GM12878 (cell line): ENCODE measurements at regions of chr5 and their contacts with region 1.

Region 1: GRCh38 chr5:77770293-77771005 is 5.7 kb downstream of the TBCA start:
- DNase-seq: no peak
- ATAC-seq: peak; percentile 23
- H3K4me3 ChIP-seq: peak overlapping the region; percentile 3; the same call in 1 of the 2 replicates
- H3K27ac ChIP-seq: no peak overlapping the region
- H3K4me1 ChIP-seq: no peaks in the 10 kb centered on the region
- H3K27me3 ChIP-seq: no peaks in the 10 kb centered on the region
- CTCF ChIP-seq: no peak
- EP300 ChIP-seq: no peak
- POLR2A ChIP-seq: no peak
- RAD21 ChIP-seq: no peak

Region 2: DNA sequence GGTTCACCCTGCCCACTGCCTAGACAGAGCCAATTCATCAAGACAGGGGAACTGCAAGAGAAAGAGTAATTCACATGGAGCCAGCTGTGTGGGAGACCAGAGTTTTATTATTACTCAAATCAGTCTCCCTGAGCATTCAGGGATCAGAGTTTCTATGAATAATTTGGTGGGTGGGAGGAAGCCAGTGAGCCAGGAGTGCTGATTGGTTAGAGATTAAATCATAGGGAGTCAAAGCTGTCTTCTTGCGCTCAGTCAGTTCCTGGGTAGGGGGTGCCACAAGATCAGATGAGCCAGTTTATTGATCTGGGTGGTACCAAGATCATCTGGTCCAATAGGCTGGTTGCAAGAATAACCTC is 18.8 kb before region 1 on chr5:
- CTCF ChIA-PET with region 1: no interaction called
- POLR2A ChIA-PET with region 1: interaction called, 5 read pairs
- RAD21 ChIA-PET with region 1: interaction called, 4 read pairs
- SMC1A ChIA-PET with region 1: interaction called, 14 read pairs
- in situ Hi-C with region 1: no loop called
- intact Hi-C with region 1: no loop called
- DNase-seq: no peak
- ATAC-seq: no peak
- H3K4me3 ChIP-seq: no peak overlapping the region
- H3K27ac ChIP-seq: no peak overlapping the region
- H3K4me1 ChIP-seq: no peaks in the 10 kb centered on the region
- H3K27me3 ChIP-seq: no peaks in the 10 kb centered on the region
- CTCF ChIP-seq: no peak
- EP300 ChIP-seq: no peak
- POLR2A ChIP-seq: no peak
- RAD21 ChIP-seq: no peak

Region 3: GRCh38 chr5:77797136-77797535 is 26.7 kb after region 1 on chr5:
- CTCF ChIA-PET with region 1: no interaction called
- POLR2A ChIA-PET with region 1: no interaction called
- RAD21 ChIA-PET with region 1: no interaction called
- SMC1A ChIA-PET with region 1: no interaction called
- in situ Hi-C with region 1: no loop called
- intact Hi-C with region 1: no loop called
- DNase-seq: no peak
- ATAC-seq: no peak
- H3K4me3 ChIP-seq: no peak overlapping the region
- H3K27ac ChIP-seq: no peak overlapping the region
- H3K4me1 ChIP-seq: no peaks in the 10 kb centered on the region
- H3K27me3 ChIP-seq: peaks cover 0 to 2% of the 10 kb centered on the region in 2 experiments; a peak in 1 of 4 replicates
- CTCF ChIP-seq: no peak
- EP300 ChIP-seq: no peak
- POLR2A ChIP-seq: no peak
- RAD21 ChIP-seq: no peak